ENCODE measurements at regions of chr17 and their contacts with region 1.

Region 1: GRCh38 chr17:18960803-18961511 is 9.0 kb downstream of the SLC5A10 start:
- DNase-seq: peak; percentile 50 to 99
- H3K4me3 ChIP-seq: no peak overlapping the region
- H3K27ac ChIP-seq: no peak overlapping the region
- H3K4me1 ChIP-seq: peaks cover 0 to 5% (median 0%) of the 10 kb centered on the region in 4 experiments; a peak in 2 of 7 replicates
- H3K27me3 ChIP-seq: no peaks in the 10 kb centered on the region
- CTCF ChIP-seq: peak; percentile 93 to 95 (median 94)
- EP300 ChIP-seq: no peak
- POLR2A ChIP-seq: no peak
- RAD21 ChIP-seq: peak; percentile 96

Region 2: GRCh38 chr17:18974407-18975132 is 13.6 kb after region 1 on chr17:
- CTCF ChIA-PET with region 1: interaction called, 30 read pairs
- POLR2A ChIA-PET with region 1: interaction called, 3 read pairs
- DNase-seq: no peak
- H3K4me3 ChIP-seq: no peak overlapping the region
- H3K27ac ChIP-seq: no peak overlapping the region
- H3K4me1 ChIP-seq: peaks cover 0 to 4% (median under 1%) of the 10 kb centered on the region in 4 experiments; a peak in 3 of 7 replicates
- H3K27me3 ChIP-seq: no peaks in the 10 kb centered on the region
- CTCF ChIP-seq: no peak
- EP300 ChIP-seq: no peak
- POLR2A ChIP-seq: no peak
- RAD21 ChIP-seq: no peak

Region 3: GRCh38 chr17:18981642-18982424 is 20.9 kb after region 1 on chr17:
- CTCF ChIA-PET with region 1: interaction called, 30 read pairs
- POLR2A ChIA-PET with region 1: no interaction called
- DNase-seq: no peak
- H3K4me3 ChIP-seq: no peak overlapping the region
- H3K27ac ChIP-seq: no peak overlapping the region
- H3K4me1 ChIP-seq: peaks cover 0 to 4% (median 0%) of the 10 kb centered on the region in 4 experiments; a peak in 2 of 7 replicates
- H3K27me3 ChIP-seq: no peaks in the 10 kb centered on the region
- CTCF ChIP-seq: no peak
- EP300 ChIP-seq: no peak
- POLR2A ChIP-seq: no peak
- RAD21 ChIP-seq: no peak

Region 4: GRCh38 chr17:18992454-18993130 is 31.6 kb after region 1 on chr17:
- CTCF ChIA-PET with region 1: interaction called, 18 read pairs
- POLR2A ChIA-PET with region 1: interaction called, 4 read pairs
- DNase-seq: no peak
- H3K4me3 ChIP-seq: no peak overlapping the region
- H3K27ac ChIP-seq: no peak overlapping the region; the same call in 1 of the 2 replicates
- H3K4me1 ChIP-seq: no peaks in the 10 kb centered on the region
- H3K27me3 ChIP-seq: no peaks in the 10 kb centered on the region
- CTCF ChIP-seq: no peak
- EP300 ChIP-seq: no peak
- POLR2A ChIP-seq: no peak
- RAD21 ChIP-seq: no peak

Region 5: DNA sequence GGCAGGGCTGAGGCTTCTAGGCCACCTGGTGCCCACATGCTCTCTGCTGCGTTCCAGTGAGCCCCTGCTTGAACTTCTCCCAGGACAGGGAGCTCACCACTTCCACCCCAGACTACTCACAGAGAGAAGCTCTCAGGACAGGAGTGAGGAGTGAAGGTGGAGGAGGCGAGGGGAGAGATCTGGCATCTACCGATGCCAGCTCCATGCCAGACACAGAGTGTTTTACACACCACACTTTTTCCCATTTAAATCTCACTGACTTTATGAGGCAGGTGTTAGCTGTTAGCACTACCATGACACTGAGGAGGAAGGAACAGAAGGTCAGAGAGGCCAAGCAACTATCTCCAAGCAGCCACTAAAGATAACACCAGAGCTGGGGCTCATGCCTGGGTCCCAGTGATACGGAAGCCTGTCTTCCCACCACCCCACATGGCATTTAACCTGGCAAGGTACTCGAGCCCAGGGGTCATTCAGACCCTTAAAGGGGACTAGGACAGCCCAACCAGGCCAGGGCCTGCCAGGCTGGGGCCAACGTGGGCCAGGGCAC is 36.8 kb after region 1 on chr17:
- CTCF ChIA-PET with region 1: interaction called, 18 read pairs
- POLR2A ChIA-PET with region 1: interaction called, 5 read pairs
- DNase-seq: no peak
- H3K4me3 ChIP-seq: no peak overlapping the region
- H3K27ac ChIP-seq: no peak overlapping the region
- H3K4me1 ChIP-seq: peaks cover 0 to 5% (median 3%) of the 10 kb centered on the region in 4 experiments; a peak in 5 of 7 replicates
- H3K27me3 ChIP-seq: no peaks in the 10 kb centered on the region
- CTCF ChIP-seq: no peak
- EP300 ChIP-seq: no peak
- POLR2A ChIP-seq: no peak
- RAD21 ChIP-seq: no peak

Region 6: GRCh38 chr17:19004421-19005136 is 43.6 kb after region 1 on chr17 and contains the start of gene FAM83G:
- CTCF ChIA-PET with region 1: interaction called, 18 read pairs
- POLR2A ChIA-PET with region 1: interaction called, 5 read pairs
- DNase-seq: peak; percentile 47 to 85
- H3K4me3 ChIP-seq: peak within 1 kb of the TSS; percentile 54 to 92 (median 82)
- H3K27ac ChIP-seq: peak within 1 kb of the TSS; percentile 75; the same call in 1 of the 2 replicates
- H3K4me1 ChIP-seq: peaks cover 0 to 23% (median 18%) of the 10 kb centered on the region in 4 experiments; a peak in 6 of 7 replicates
- H3K27me3 ChIP-seq: no peaks in the 10 kb centered on the region
- CTCF ChIP-seq: no peak
- EP300 ChIP-seq: no peak
- POLR2A ChIP-seq: no peak; a peak in 1 of 3 replicates
- RAD21 ChIP-seq: no peak
- total RNA-seq, gene FAM83G: 28.7 and 29.0 TPM in 2 replicates

Region 7: GRCh38 chr17:19021622-19022083 is 60.7 kb after region 1 on chr17:
- CTCF ChIA-PET with region 1: interaction called, 49 read pairs
- POLR2A ChIA-PET with region 1: interaction called, 3 read pairs
- DNase-seq: peak in 1 of 2 experiments; percentile 81
- H3K4me3 ChIP-seq: no peak overlapping the region
- H3K27ac ChIP-seq: no peak overlapping the region
- H3K4me1 ChIP-seq: peaks cover 0 to 3% (median 0%) of the 10 kb centered on the region in 4 experiments; a peak in 1 of 7 replicates
- H3K27me3 ChIP-seq: no peaks in the 10 kb centered on the region; a peak in 1 of 7 replicates
- CTCF ChIP-seq: no peak
- EP300 ChIP-seq: no peak
- POLR2A ChIP-seq: no peak
- RAD21 ChIP-seq: no peak

Region 8: GRCh38 chr17:19362277-19363113 is 401.5 kb after region 1 on chr17 and contains the start of gene B9D1:
- CTCF ChIA-PET with region 1: no interaction called
- POLR2A ChIA-PET with region 1: no interaction called
- DNase-seq: peak; percentile 73 to 97
- H3K4me3 ChIP-seq: peak within 1 kb of the TSS; percentile 34 to 93 (median 75)
- H3K27ac ChIP-seq: no peak within 1 kb of the TSS; the same call in 1 of the 2 replicates
- H3K4me1 ChIP-seq: peaks cover 0 to 9% (median 3%) of the 10 kb centered on the region in 4 experiments; a peak in 4 of 7 replicates
- H3K27me3 ChIP-seq: no peaks in the 10 kb centered on the region; a peak in 1 of 7 replicates
- CTCF ChIP-seq: peak; percentile 91 to 99 (median 95)
- EP300 ChIP-seq: peak in 1 of 2 experiments; percentile 27; a peak in 1 of 3 replicates
- POLR2A ChIP-seq: no peak
- RAD21 ChIP-seq: peak; percentile 99
- total RNA-seq, gene B9D1: 24.6 and 25.4 TPM in 2 replicates